ENCODE measurements at regions of chr11 and their contacts with region 1.

Region 1: DNA sequence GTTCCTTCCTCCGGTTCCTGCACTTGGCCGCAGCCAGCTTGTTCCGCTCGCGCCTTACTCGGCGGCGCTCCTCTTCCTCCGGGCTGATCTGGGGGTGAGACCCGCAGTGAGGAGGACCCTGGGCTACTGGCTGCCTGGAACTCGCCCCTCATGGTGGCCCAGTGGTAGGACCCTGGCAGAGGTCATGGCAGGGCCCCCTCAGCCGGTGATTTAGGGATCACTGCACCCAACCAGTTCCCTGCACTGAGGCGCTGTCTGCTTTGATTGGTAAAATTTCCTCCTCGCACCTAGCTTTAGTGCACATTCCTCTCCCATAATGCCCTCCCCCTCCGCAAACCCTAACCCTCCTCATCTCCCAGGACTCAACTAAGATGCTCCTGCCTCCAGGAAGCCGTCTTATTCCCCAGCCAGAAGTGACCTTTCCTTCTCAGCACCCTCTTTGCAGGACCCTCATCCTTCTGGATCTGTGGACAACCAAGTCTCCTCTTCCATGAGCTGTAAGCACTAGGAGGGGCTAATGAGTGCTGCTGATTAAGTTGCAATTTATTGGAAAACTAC is 3.6 kb downstream of the CCDC85B start:
- DNase-seq: peak in 2 of 5 donors; percentile 40
- H3K4me3 ChIP-seq: peak overlapping the region; percentile 53
- H3K4me3 Mint-ChIP-seq: peak overlapping the region; percentile 78 to 92 (median 83)
- H3K27ac ChIP-seq: peak overlapping the region; percentile 35
- H3K27ac Mint-ChIP-seq: peak overlapping the region; percentile 84 to 99 (median 92)
- H3K4me1 ChIP-seq: peaks cover 49% of the 10 kb centered on the region
- H3K4me1 Mint-ChIP-seq: peaks cover 46 to 48% (median 46%) of the 10 kb centered on the region in 3 donors
- H3K27me3 ChIP-seq: peaks cover 6% of the 10 kb centered on the region
- H3K27me3 Mint-ChIP-seq: no peaks in the 10 kb centered on the region

Region 2: DNA sequence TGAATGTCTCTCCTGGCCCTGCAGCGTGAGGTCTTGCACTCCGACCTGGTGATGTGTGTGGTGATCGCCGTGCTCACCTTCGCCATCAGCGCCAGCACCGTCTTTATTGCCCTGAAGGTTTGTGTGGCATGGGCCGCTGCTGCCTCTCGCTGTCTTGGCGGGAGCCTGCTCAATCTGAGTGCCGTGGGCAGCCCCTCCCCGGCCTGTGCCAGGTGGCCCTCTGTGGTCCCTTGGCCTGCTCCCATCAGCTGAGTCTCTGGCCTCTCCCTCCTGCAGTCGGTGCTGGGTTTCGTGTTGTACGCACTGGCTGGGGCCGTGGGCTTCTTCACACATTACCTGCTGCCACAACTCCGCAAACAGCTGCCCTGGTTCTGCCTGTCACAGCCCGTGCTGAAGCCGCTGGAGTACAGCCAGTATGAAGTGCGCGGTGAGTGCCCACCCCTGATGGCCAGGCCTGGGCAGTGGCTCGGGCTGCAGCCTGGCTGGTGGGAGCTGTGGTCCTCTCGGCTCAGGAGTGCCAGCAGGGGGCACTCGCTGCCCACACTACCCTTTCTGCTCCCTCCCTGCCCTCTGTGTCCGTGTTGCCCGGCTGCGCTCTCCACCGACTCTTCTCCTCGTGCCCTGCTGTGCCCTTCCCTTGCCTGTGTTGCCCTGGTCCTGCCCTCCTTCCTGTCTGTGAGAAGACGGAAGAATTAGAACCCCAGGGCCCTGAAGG is 268.3 kb before region 1 on chr11:
- CTCF ChIA-PET with region 1: no interaction called
- POLR2A ChIA-PET with region 1: no interaction called
- DNase-seq: peak; percentile 48 to 73 (median 57)
- H3K4me3 ChIP-seq: no peak overlapping the region
- H3K4me3 Mint-ChIP-seq: no peak overlapping the region
- H3K27ac ChIP-seq: no peak overlapping the region
- H3K27ac Mint-ChIP-seq: peak overlapping the region; percentile 10 to 84 (median 71)
- H3K4me1 ChIP-seq: peaks cover 7% of the 10 kb centered on the region
- H3K4me1 Mint-ChIP-seq: peaks cover 4 to 14% (median 6%) of the 10 kb centered on the region in 3 donors
- H3K27me3 ChIP-seq: no peaks in the 10 kb centered on the region
- H3K27me3 Mint-ChIP-seq: no peaks in the 10 kb centered on the region

Region 3: GRCh38 chr11:65810046-65810868 is 83.9 kb before region 1 on chr11:
- CTCF ChIA-PET with region 1: no interaction called
- POLR2A ChIA-PET with region 1: no interaction called
- DNase-seq: no peak
- H3K4me3 ChIP-seq: no peak overlapping the region
- H3K4me3 Mint-ChIP-seq: peak overlapping the region in 1 of 7 donors; percentile 42
- H3K27ac ChIP-seq: no peak overlapping the region
- H3K27ac Mint-ChIP-seq: peak overlapping the region in 2 of 8 donors; percentile 13 to 58
- H3K4me1 ChIP-seq: no peaks in the 10 kb centered on the region
- H3K4me1 Mint-ChIP-seq: no peaks in the 10 kb centered on the region
- H3K27me3 ChIP-seq: peaks cover 8% of the 10 kb centered on the region
- H3K27me3 Mint-ChIP-seq: peaks cover 10 to 12% of the 10 kb centered on the region in 2 donors

Region 4: DNA sequence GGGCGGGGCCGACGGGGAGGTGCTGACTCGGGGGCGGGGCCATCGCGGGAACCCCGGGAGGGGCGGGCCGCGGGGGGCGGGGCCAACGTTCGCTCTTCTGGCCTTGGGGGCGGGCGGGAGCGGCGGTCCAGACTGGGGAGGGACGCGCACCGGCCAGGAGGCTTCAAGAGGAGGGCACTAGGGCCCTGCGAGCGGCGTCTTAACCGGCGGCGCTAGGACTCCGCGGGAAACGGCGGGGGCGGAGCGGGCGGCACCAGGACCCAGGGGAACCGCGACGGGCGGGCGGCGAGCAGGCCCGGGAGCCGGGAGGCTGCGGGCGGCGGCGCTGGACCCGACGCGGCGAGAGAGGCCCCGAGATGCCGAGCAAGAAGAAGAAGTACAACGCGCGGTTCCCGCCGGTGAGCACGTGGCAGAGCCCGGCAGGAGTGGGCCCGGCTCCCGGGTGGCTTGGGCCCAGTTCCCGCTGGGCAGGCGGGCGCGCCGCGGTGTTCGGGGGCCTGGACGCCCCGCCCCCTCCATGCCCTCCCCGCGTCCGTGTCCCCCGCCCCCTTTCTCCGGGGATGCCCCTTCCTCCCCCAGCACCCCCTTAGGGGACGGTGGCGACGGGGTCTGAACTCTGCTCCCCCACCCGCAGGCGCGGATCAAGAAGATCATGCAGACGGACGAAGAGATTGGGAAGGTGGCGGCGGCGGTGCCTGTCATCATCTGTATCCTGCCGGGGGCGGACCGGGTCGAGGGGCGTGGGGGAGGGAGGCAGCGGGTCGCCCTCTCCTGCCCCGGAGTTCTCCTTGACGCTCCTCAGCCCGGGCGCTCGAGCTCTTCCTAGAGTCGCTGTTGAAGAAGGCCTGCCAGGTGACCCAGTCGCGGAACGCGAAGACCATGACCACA is 25.3 kb after region 1 on chr11 and contains the start of gene DRAP1:
- CTCF ChIA-PET with region 1: interaction called, 33 read pairs
- POLR2A ChIA-PET with region 1: interaction called, 30 read pairs
- DNase-seq: peak; percentile 96 to 100 (median 98)
- H3K4me3 ChIP-seq: peak within 1 kb of the TSS; percentile 96
- H3K4me3 Mint-ChIP-seq: peak within 1 kb of the TSS; percentile 88 to 98 (median 93)
- H3K27ac ChIP-seq: peak within 1 kb of the TSS; percentile 82
- H3K27ac Mint-ChIP-seq: peak within 1 kb of the TSS; percentile 86 to 98 (median 91)
- H3K4me1 ChIP-seq: peaks cover 38% of the 10 kb centered on the region
- H3K4me1 Mint-ChIP-seq: peaks cover 27 to 63% (median 36%) of the 10 kb centered on the region in 3 donors
- H3K27me3 ChIP-seq: no peaks in the 10 kb centered on the region
- H3K27me3 Mint-ChIP-seq: peaks cover 0 to 3% of the 10 kb centered on the region in 2 donors
- total RNA-seq, gene DRAP1: 94.6 to 103 TPM